ENCODE measurements at regions of chr4 and their contacts with region 1.

Region 1: GRCh38 chr4:185183619-185184281 is 20.1 kb downstream of the CFAP97 start:
- DNase-seq: peak; percentile 89
- ATAC-seq: peak; percentile 66
- H3K4me3 ChIP-seq: no peak overlapping the region
- H3K27ac ChIP-seq: no peak overlapping the region
- H3K4me1 ChIP-seq: no peaks in the 10 kb centered on the region
- H3K27me3 ChIP-seq: no peaks in the 10 kb centered on the region
- CTCF ChIP-seq: peak; percentile 80

Region 2: DNA sequence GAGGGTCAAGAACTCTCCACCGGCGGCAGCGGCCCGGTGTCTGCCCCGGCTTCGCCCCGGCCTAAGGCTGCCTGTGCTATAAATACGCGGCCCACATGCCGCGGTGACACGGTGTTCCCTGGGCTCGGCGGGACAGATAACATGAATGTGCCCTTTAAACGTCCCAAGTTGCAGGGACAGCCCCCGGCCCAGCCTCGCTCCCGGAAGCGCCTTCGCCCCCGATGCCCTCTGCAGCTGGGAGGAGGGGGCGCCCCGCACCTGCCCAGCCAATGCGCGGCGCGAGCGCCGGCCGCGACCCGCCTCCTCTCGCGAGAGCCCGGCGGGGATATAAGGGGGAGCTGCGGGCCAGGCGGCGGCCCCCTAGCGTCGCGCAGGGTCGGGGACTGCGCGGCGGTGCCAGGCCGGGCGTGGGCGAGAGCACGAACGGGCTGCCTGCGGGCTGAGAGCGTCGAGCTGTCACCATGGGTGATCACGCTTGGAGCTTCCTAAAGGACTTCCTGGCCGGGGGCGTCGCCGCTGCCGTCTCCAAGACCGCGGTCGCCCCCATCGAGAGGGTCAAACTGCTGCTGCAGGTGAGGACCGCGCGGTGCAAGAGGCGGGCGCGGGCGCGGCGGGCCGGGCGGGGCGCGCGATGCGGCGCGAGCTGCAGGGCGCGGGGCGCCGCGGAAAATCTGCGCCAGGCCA is 40.7 kb before region 1 on chr4 and contains the start of gene SLC25A4:
- CTCF ChIA-PET with region 1: no interaction called
- POLR2A ChIA-PET with region 1: no interaction called
- intact Hi-C with region 1: loop called (anchors 5 kb)
- DNase-seq: peak; percentile 76
- ATAC-seq: peak; percentile 93
- H3K4me3 ChIP-seq: peak within 1 kb of the TSS; percentile 83
- H3K27ac ChIP-seq: no peak within 1 kb of the TSS
- H3K4me1 ChIP-seq: peaks cover 13% of the 10 kb centered on the region; the same call in 1 of the 2 replicates
- H3K27me3 ChIP-seq: no peaks in the 10 kb centered on the region
- CTCF ChIP-seq: 0 out of 2 replicates have a peak, but pooled peaks have one; percentile 30
- total RNA-seq, gene SLC25A4: 20.7 and 23.2 TPM in 2 replicates